ENCODE measurements at regions of chr12 and their contacts with region 1.

Region 1: GRCh38 chr12:7108796-7109571 is at the start of gene C1RL:
- DNase-seq: peak; percentile 96 to 97
- H3K4me3 ChIP-seq: peak within 1 kb of the TSS; percentile 63 to 70
- H3K27ac ChIP-seq: peak within 1 kb of the TSS; percentile 96 to 98
- H3K4me1 ChIP-seq: peaks cover 0 to 3% of the 10 kb centered on the region in 2 donors
- H3K27me3 ChIP-seq: no peaks in the 10 kb centered on the region
- CTCF ChIP-seq: peak; percentile 94 to 99 (median 98)
- POLR2A ChIP-seq: peak; percentile 28 to 49
- total RNA-seq, gene C1RL: 15.4 to 121 (median 37.4) TPM

Region 2: DNA sequence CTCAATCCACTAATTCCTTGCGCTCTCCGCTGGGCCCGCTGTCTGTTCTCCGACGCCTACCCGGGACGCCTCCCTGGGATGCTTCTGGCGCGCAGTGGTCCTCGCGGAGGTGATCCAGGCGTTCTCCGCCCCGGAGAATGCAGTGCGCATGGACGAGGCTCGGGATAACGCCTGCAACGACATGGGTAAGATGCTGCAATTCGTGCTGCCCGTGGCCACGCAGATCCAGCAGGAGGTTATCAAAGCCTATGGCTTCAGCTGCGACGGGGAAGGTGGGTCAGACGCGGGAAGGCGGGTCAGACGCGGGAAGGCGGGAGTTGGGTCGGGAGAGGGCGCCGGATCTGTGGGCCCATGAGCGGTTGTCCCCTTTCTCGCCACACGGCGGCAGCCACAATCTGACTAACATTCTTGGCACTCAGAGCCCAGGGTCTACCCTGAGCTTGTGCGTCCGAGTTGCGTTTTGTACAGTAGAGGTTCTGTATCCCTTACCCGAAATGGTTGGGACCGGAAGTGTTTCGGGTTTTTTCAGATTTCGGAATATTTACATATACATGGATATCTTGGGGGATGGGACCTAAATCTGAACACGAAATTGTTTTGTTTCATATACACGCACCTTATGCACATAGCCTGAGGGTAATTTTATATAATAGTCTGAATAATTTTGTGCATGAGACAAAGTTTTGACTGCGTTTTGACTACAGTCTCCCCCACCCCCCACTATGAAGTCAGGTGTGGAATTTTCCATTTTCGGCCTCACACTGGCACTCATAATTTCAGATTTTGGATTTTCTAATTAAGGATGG is 164.4 kb before region 1 on chr12:
- intact Hi-C with region 1: loop called (anchors 10 kb)
- DNase-seq: peak; percentile 94
- H3K4me3 ChIP-seq: peak overlapping the region; percentile 74 to 80
- H3K27ac ChIP-seq: peak overlapping the region; percentile 93 to 94
- H3K4me1 ChIP-seq: peaks cover 4 to 6% of the 10 kb centered on the region in 2 donors
- H3K27me3 ChIP-seq: no peaks in the 10 kb centered on the region
- CTCF ChIP-seq: peak; percentile 84 to 96 (median 89)
- POLR2A ChIP-seq: peak; percentile 14 to 50

Region 3: GRCh38 chr12:7060353-7060954 is 48.5 kb before region 1 on chr12 and contains the start of gene C1S:
- intact Hi-C with region 1: loop called (anchors 5 kb)
- DNase-seq: peak; percentile 83 to 91
- H3K4me3 ChIP-seq: peak within 1 kb of the TSS; percentile 40 to 49
- H3K27ac ChIP-seq: peak within 1 kb of the TSS; percentile 88 to 90
- H3K4me1 ChIP-seq: peaks cover 0 to 6% of the 10 kb centered on the region in 2 donors
- H3K27me3 ChIP-seq: no peaks in the 10 kb centered on the region
- CTCF ChIP-seq: peak; percentile 92 to 99 (median 96)
- POLR2A ChIP-seq: peak; percentile 47 to 70
- total RNA-seq, gene C1S: 172 to 554 (median 468) TPM

Measured in uterus (tissue), 4 donors.